ENCODE measurements at regions of chr10 and their contacts with region 1.

Region 1: GRCh38 chr10:28676968-28677887 is at the start of gene BAMBI:
- DNase-seq: peak; percentile 93 to 96 (median 93)
- ATAC-seq: peak; percentile 92 to 98 (median 97)
- H3K4me3 ChIP-seq: peak within 1 kb of the TSS; percentile 66 to 97 (median 84)
- H3K27ac ChIP-seq: peak within 1 kb of the TSS; percentile 61 to 90 (median 83)
- H3K4me1 ChIP-seq: peaks cover 0 to 44% (median 17%) of the 10 kb centered on the region in 12 donors
- H3K27me3 ChIP-seq: peaks cover 0 to 83% (median 5%) of the 10 kb centered on the region in 9 donors
- CTCF ChIP-seq: peak; percentile 28 to 80 (median 68)
- POLR2A ChIP-seq: peak; percentile 95 to 100
- total RNA-seq, gene BAMBI: 10.8 to 44.7 (median 24.8) TPM

Region 2: DNA sequence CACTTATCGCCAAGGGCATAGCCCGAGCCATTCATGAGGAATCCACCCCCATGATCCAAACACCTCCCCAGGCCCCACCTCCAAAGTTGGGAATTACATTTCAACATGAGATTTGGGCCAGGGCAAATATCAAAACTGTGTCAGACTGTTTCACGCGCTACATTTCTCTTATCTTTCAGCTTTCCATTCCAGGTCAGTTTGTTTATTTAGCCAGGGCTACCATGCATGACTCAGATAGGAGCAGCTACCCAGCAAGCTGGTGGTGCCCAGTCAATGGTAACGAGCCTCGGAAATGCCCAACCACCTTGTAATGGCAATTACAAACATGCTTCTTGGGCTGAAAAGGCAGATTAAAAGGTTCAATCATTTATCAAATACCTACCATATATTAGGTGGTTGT is 43.5 kb before region 1 on chr10:
- intact Hi-C with region 1: no loop called
- DNase-seq: no peak
- ATAC-seq: peak in 1 of 4 donors; percentile 64
- H3K4me3 ChIP-seq: no peak overlapping the region
- H3K27ac ChIP-seq: no peak overlapping the region
- H3K4me1 ChIP-seq: no peaks in the 10 kb centered on the region
- H3K27me3 ChIP-seq: peaks cover 0 to 10% (median 0%) of the 10 kb centered on the region in 9 donors
- CTCF ChIP-seq: no peak
- POLR2A ChIP-seq: no peak

Region 3: DNA sequence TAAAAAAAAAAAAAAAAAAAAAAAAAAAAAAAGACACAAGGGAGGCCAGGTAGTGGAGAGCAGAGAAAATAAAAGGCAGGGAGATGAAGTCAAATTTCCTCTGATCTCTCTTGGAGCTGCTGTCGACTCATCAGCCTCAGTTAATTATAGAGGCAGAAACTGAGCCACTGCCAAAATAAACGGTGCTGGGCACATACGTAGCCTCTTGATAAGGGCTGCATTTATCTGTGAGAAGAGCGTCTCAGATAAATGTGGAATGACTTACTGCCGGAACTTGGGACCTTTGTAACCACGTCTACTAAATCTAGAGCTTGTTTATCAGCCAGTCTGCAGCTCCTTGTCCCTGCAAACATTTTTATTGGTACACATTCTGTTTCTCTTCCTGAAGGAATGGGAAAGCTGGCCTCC is 162.4 kb after region 1 on chr10:
- intact Hi-C with region 1: loop called in 3 of 10 experiments (anchors 2 to 5 kb)
- DNase-seq: peak in 4 of 5 donors; percentile 57 to 70 (median 58)
- ATAC-seq: peak; percentile 85 to 96 (median 94)
- H3K4me3 ChIP-seq: peak overlapping the region in 1 of 12 donors; percentile 0
- H3K27ac ChIP-seq: peak overlapping the region; percentile 4 to 88 (median 66)
- H3K4me1 ChIP-seq: peaks cover 0 to 40% (median 15%) of the 10 kb centered on the region in 12 donors
- H3K27me3 ChIP-seq: no peaks in the 10 kb centered on the region
- CTCF ChIP-seq: no peak
- POLR2A ChIP-seq: no peak

Region 4: GRCh38 chr10:28892816-28893547 is 215.8 kb after region 1 on chr10:
- intact Hi-C with region 1: loop called in 3 of 10 experiments (anchors 2 to 10 kb)
- DNase-seq: no peak
- ATAC-seq: no peak
- H3K4me3 ChIP-seq: no peak overlapping the region
- H3K27ac ChIP-seq: no peak overlapping the region
- H3K4me1 ChIP-seq: peaks cover 0 to 7% (median 0%) of the 10 kb centered on the region in 12 donors
- H3K27me3 ChIP-seq: no peaks in the 10 kb centered on the region
- CTCF ChIP-seq: no peak
- POLR2A ChIP-seq: no peak

Region 5: GRCh38 chr10:28991326-28992270 is 314.4 kb after region 1 on chr10:
- intact Hi-C with region 1: loop called in 7 of 10 experiments (anchors 1 to 5 kb)
- DNase-seq: peak in 4 of 5 donors; percentile 24 to 42 (median 38)
- ATAC-seq: peak; percentile 66 to 90 (median 88)
- H3K4me3 ChIP-seq: no peak overlapping the region
- H3K27ac ChIP-seq: peak overlapping the region in 3 of 12 donors; percentile 17 to 71 (median 39)
- H3K4me1 ChIP-seq: peaks cover 0 to 7% (median 0%) of the 10 kb centered on the region in 12 donors
- H3K27me3 ChIP-seq: no peaks in the 10 kb centered on the region
- CTCF ChIP-seq: peak; percentile 59 to 78 (median 68)
- POLR2A ChIP-seq: no peak